ENCODE measurements at regions of chr12 and their contacts with region 1.

Region 1: DNA sequence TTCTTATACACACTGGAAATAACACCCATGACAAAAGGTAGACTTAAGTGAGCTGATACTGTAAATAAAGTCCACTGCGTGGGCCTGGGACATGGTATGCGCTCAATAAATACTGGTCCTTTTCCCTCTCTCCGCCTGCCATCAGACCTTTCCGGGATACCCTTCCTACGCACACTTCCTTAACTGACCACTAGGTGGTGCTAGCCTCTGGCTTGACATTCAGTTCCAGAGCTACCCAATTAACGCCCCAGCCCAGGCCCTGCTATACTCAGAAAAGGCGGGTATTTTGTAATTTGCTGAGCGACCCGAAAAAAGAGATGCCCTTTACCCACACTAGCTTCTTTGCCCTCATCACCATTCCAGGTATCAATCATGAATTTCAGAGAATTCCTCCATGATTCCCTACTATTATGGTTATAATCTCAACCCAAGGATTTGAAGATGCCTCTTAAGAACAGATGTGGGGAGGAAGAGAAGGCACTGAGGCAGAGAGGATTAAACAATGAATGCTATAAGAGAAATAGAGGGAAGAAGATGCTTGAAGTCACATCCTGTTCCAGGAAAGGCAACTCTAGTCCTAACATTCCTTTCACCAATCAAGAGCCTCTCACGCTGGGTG is 3.9 kb upstream of the LRP1 start:
- DNase-seq: peak; percentile 70
- CTCF ChIP-seq: peak; percentile 74

Region 2: DNA sequence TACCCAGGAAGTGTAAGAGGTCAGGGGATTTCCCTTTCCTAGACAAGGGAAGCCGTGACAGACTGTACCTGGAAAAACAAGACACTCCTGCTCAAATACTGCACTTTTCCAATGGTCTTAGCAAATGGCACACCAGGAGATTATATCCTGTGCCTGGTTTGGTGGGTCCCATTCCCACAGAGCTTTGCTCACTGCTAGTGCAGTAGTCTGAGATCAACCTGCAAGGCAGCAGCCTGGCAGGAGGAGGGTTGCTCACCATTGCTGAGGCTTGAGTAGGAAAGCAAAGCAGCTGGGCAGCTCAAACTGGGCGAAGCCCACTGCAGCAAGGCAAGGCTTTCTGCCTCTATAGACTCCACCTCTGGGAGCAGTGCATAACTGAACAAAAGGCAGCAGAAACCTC is 165.9 kb before region 1 on chr12:
- CTCF ChIA-PET with region 1: no interaction called
- POLR2A ChIA-PET with region 1: no interaction called
- DNase-seq: no peak
- CTCF ChIP-seq: no peak

Region 3: DNA sequence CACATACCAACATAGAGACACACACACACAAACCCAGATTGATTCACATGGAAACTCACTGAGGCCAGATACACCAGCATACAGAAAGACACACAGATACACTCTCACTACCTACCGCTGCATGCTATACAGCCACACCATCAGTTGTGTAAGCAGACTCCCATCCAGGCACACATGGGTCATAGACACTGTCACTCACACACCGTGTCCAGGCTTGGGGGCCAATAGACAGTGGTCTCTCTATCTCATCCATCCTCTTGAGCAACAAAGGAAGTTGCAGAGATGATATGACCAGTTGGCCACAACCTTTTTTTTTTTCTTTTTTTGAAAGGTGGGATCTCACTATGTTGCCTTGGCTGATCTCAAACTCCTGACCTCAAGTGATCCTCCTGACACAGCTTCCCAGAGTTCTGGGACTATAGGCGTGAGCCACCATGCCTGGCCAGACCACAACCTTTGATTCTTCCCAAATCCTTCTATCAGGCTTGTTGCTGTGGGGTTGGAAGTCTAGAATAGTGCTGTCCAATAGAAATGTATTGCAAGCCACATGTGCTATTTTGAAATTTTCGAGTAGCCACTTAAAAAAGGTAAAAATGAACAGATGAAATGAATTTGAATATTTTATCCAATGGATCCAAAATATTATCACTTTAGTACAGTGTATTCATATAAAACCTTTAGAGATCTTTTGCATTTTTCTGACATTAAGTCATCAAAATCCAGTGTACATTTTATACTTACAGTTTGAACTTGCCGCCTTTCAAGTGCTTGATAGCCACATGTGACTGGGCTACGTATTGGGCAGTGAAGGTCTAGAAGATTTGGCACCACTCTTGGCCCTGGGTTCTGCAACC is 15.7 kb after region 1 on chr12:
- CTCF ChIA-PET with region 1: interaction called, 14 read pairs
- POLR2A ChIA-PET with region 1: no interaction called
- DNase-seq: no peak
- CTCF ChIP-seq: no peak

Region 4: GRCh38 chr12:57175428-57176138 is 51.2 kb after region 1 on chr12:
- CTCF ChIA-PET with region 1: interaction called, 159 read pairs
- POLR2A ChIA-PET with region 1: interaction called, 4 read pairs
- DNase-seq: peak; percentile 77
- CTCF ChIP-seq: peak; percentile 42

Region 5: DNA sequence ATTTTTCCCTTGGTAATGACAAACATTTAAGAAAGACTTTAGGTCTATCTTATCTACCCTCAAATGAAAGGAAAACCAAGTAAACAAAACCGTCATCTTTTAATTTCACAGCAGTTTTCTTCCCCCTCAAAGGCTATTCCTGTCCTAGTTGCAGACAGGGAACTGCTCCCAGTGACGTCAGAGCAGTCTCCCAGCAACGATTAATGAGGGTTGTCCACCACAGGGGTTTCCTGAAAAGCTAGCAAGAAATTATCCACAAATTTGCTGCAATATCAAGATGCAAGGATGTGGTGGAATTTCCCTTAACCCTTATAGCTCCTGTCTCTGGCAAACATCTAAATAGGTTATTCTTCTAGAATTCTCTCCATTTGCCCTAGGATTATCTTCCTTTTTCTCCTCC is 215.7 kb after region 1 on chr12:
- CTCF ChIA-PET with region 1: no interaction called
- POLR2A ChIA-PET with region 1: no interaction called
- DNase-seq: no peak
- CTCF ChIP-seq: no peak